ENCODE measurements at regions of chr3 and their contacts with region 1.

Region 1: GRCh38 chr3:117526470-117527079 is 817.0 kb downstream of the TUSC7 start:
- DNase-seq: peak in 5 of 10 donors; percentile 12 to 59 (median 45)

Region 2: DNA sequence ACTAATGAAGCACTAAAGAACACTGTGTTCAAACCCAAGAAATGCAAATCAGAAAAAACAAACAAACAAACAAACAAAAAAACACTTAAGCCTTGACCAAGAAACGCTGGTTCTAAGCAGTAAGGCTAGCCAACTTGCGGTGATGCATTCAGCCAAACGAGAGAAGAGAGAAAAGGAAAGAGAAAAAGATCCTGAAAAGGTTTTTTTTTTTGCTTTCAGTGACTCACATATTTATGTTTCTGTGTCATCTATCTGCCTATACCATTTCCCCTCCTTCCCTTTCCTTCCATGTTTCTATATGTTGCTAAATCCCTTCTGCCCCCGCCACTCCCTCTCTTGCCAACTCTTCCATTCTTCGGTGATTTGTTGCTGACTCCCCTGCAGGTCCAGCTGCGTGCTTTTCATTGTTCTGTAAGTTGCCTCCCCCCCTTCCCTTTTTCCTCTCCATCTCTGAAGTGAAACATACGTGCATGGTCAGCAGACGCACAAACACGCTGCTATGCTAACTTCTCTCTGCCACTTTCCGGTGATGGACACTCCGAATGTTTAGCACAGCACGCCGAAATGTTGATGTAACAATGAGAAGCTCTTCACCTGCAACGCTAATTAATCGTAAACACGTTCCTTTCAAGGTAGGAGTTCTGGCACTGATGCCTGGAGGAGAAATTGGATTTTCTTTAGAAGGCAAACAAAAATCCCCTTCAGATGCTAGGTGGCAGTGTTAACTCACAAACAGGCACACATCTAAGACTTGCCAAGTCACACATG is 662.6 kb before region 1 on chr3:
- intact Hi-C with region 1: loop called (anchors 10 kb)
- DNase-seq: peak in 6 of 10 donors; percentile 7 to 71 (median 38)

Region 3: GRCh38 chr3:117019082-117019713 is 507.4 kb before region 1 on chr3:
- intact Hi-C with region 1: loop called (anchors 2 kb)
- DNase-seq: peak; percentile 42 to 95 (median 79)

Region 4: DNA sequence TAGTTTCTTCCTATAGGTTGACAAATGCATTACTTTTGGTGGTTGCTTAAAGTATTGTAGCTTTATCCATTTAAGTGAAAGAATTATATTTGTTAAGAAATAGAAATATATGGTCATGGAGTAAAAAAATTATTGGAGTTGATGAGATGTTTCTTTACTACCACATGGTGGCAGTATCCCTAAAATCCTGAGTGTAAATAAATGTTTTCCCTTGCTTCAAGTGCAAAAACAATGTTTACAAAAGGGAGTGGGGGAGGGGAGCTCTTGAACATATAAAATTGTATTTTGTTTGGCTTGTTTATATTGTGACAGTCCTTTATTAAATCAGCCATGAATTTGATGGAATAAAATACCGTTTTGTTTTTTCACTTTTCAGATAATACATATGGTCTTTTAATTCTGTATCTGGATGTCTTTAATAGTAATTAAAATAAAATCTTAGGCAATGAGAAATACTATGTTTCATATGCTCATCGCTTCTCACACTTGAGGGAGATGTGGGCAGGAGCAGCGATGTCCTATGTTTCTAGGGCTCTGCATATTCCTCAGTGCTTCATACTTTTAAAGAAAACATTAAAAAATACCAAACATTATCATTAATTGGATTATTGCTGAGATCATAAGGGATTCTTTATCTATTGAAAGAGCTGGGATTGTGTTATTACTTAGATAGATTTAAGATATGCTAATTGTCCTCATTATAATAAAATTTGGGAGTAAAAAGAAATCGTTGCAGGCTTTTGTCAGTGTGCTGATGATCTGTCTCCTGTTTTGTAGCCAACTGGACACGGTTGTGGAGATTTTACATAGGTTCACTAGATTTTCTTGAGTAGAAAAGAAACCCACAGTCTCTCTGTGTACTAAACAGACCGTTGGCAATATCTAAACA is 467.3 kb before region 1 on chr3:
- intact Hi-C with region 1: loop called (anchors 5 kb)
- DNase-seq: no peak

Region 5: GRCh38 chr3:117355566-117355965 is 171.0 kb before region 1 on chr3:
- intact Hi-C with region 1: loop called (anchors 10 kb)
- DNase-seq: peak in 2 of 10 donors; percentile 15 to 35

Region 6: GRCh38 chr3:117399311-117400078 is 127.1 kb before region 1 on chr3:
- intact Hi-C with region 1: loop called (anchors 10 kb)
- DNase-seq: peak in 2 of 10 donors; percentile 14 to 22

Measured in posterior cingulate gyrus (tissue), 11 donors.